ENCODE measurements at regions of chr1 and their contacts with region 1.

Region 1: DNA sequence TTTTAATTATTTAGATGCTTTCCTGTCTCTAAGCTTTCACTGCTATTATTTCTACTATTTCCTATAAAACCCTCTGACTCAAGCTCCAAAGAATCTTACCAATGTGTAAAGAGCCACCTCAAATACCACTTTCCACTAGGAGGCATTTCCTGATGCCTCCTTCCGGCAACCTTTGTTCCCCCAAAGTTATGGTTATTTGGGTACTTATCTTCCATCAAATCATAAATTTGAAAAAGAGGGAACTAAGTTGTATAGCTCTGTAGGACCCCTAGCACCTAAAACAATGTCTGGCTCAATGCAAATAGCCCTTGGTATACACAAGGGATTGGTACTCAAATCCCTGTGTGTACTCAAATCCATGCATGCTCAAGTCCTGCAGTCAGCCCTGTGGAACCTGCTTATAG is 79.6 kb downstream of the NME7 start:
- DNase-seq: peak; percentile 18
- H3K4me3 ChIP-seq: no peak overlapping the region
- H3K27ac ChIP-seq: peak overlapping the region; percentile 5
- H3K4me1 ChIP-seq: peaks cover 13% of the 10 kb centered on the region
- H3K27me3 ChIP-seq: no peaks in the 10 kb centered on the region
- CTCF ChIP-seq: no peak
- POLR2A ChIP-seq: no peak

Region 2: GRCh38 chr1:169106095-169106920 is 181.7 kb before region 1 on chr1 and contains the start of gene ATP1B1:
- CTCF ChIA-PET with region 1: no interaction called
- POLR2A ChIA-PET with region 1: no interaction called
- dilution Hi-C with region 1: no loop called
- intact Hi-C with region 1: no loop called
- DNase-seq: peak; percentile 87
- H3K4me3 ChIP-seq: peak within 1 kb of the TSS; percentile 89 to 99 (median 94)
- H3K27ac ChIP-seq: peak within 1 kb of the TSS; percentile 89
- H3K4me1 ChIP-seq: peaks cover 35% of the 10 kb centered on the region
- H3K27me3 ChIP-seq: no peaks in the 10 kb centered on the region
- CTCF ChIP-seq: peak in 1 of 2 donors; percentile 44
- POLR2A ChIP-seq: peak; percentile 90
- total RNA-seq, gene ATP1B1: 56.1 and 60.5 TPM in 2 replicates

Region 3: GRCh38 chr1:169250022-169250421 is 38.0 kb before region 1 on chr1:
- CTCF ChIA-PET with region 1: no interaction called
- POLR2A ChIA-PET with region 1: no interaction called
- dilution Hi-C with region 1: no loop called
- intact Hi-C with region 1: loop called (anchors 5 kb)
- DNase-seq: peak; percentile 53
- H3K4me3 ChIP-seq: peak overlapping the region in 1 of 3 experiments; percentile 23
- H3K27ac ChIP-seq: no peak overlapping the region
- H3K4me1 ChIP-seq: peaks cover 6% of the 10 kb centered on the region
- H3K27me3 ChIP-seq: no peaks in the 10 kb centered on the region
- CTCF ChIP-seq: no peak
- POLR2A ChIP-seq: no peak

Region 4: GRCh38 chr1:170067253-170067819 is 779.3 kb after region 1 on chr1:
- CTCF ChIA-PET with region 1: no interaction called
- POLR2A ChIA-PET with region 1: no interaction called
- dilution Hi-C with region 1: no loop called
- intact Hi-C with region 1: no loop called
- DNase-seq: peak; percentile 62
- H3K4me3 ChIP-seq: no peak overlapping the region
- H3K27ac ChIP-seq: no peak overlapping the region
- H3K4me1 ChIP-seq: no peaks in the 10 kb centered on the region
- H3K27me3 ChIP-seq: no peaks in the 10 kb centered on the region
- CTCF ChIP-seq: no peak
- POLR2A ChIP-seq: no peak